ENCODE measurements at regions of chr22 and their contacts with region 1.

Region 1: GRCh38 chr22:20174785-20175596 is 24.1 kb upstream of the CCDC188 start:
- DNase-seq: no peak
- ATAC-seq: no peak
- H3K4me3 ChIP-seq: no peak overlapping the region
- H3K4me3 Mint-ChIP-seq: no peak overlapping the region
- H3K27ac ChIP-seq: no peak overlapping the region
- H3K27ac Mint-ChIP-seq: no peak overlapping the region
- H3K4me1 ChIP-seq: no peaks in the 10 kb centered on the region
- H3K4me1 Mint-ChIP-seq: no peaks in the 10 kb centered on the region
- H3K27me3 ChIP-seq: no peaks in the 10 kb centered on the region
- H3K27me3 Mint-ChIP-seq: no peaks in the 10 kb centered on the region
- CTCF ChIP-seq: no peak

Region 2: GRCh38 chr22:20229916-20230775 is 55.2 kb after region 1 on chr22:
- CTCF ChIA-PET with region 1: no interaction called
- POLR2A ChIA-PET with region 1: no interaction called
- intact Hi-C with region 1: loop called in 1 of 2 experiments (anchors 10 kb)
- DNase-seq: no peak
- ATAC-seq: no peak
- H3K4me3 ChIP-seq: no peak overlapping the region
- H3K4me3 Mint-ChIP-seq: no peak overlapping the region
- H3K27ac ChIP-seq: no peak overlapping the region
- H3K27ac Mint-ChIP-seq: no peak overlapping the region
- H3K4me1 ChIP-seq: no peaks in the 10 kb centered on the region
- H3K4me1 Mint-ChIP-seq: no peaks in the 10 kb centered on the region
- H3K27me3 ChIP-seq: no peaks in the 10 kb centered on the region
- H3K27me3 Mint-ChIP-seq: no peaks in the 10 kb centered on the region
- CTCF ChIP-seq: no peak

Region 3: GRCh38 chr22:20606041-20606783 is 431.2 kb after region 1 on chr22:
- CTCF ChIA-PET with region 1: no interaction called
- POLR2A ChIA-PET with region 1: no interaction called
- intact Hi-C with region 1: no loop called
- DNase-seq: peak; percentile 38 to 85 (median 72)
- ATAC-seq: peak; percentile 96
- H3K4me3 ChIP-seq: no peak overlapping the region
- H3K4me3 Mint-ChIP-seq: no peak overlapping the region
- H3K27ac ChIP-seq: no peak overlapping the region
- H3K27ac Mint-ChIP-seq: no peak overlapping the region
- H3K4me1 ChIP-seq: peaks cover 7% of the 10 kb centered on the region
- H3K4me1 Mint-ChIP-seq: peaks cover 14% of the 10 kb centered on the region
- H3K27me3 ChIP-seq: no peaks in the 10 kb centered on the region
- H3K27me3 Mint-ChIP-seq: no peaks in the 10 kb centered on the region
- CTCF ChIP-seq: peak; percentile 71

Measured in CD8-positive, alpha-beta T cell (primary cell).